Sigmoid colon (tissue), 7 donors: ENCODE measurements at regions of chr12 and their contacts with region 1.

Region 1: DNA sequence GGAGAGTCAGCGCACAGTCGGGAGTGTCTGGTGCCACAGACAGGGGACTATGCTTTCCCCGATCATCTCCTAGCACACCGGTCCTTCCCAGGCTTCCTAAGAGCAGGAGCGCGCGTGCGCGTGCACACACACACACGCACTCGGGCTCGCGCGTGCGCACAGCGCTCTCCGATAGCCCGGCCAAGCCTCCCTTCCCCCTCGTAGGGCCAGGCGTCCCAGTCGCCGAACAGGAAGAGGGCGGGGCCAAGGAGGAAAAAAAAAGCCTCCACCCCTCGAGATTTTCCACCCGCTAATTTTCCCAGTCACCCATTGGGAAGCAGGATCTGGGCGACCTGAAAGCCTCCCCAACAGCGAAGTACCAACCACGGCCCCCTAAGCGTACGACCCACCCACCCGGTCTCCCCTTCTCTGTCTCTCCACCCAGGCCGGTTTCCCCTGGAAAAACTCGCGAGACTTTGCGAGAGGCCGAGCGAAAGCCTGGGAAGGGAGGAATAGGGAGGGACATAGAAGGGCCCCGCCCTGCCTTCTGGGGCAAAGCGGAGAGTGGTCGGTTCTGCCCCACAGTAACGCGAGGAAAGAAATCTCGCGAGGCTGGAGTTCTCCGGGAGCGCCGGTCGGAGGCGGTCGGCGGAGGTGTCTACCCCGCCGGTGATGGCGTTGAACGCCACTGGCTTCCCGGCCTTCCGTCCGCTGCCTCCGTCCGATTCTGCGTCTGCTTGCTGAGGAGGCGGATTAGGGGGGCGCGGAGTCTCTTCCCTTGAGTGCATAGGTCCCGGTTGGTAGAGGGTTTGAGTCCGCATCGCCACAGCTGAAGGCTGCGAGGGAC is at the starts of genes FGFR1OP2 and INTS13:
- DNase-seq: peak; percentile 100
- H3K4me3 ChIP-seq: peak within 1 kb of the TSS; percentile 71 to 96 (median 82)
- H3K27ac ChIP-seq: peak within 1 kb of the TSS; percentile 92 to 98 (median 96)
- H3K4me1 ChIP-seq: peaks cover 0 to 60% (median 46%) of the 10 kb centered on the region in 4 donors
- H3K27me3 ChIP-seq: no peaks in the 10 kb centered on the region
- CTCF ChIP-seq: no peak
- EP300 ChIP-seq: peak in 1 of 4 donors; percentile 79
- POLR2A ChIP-seq: peak; percentile 99
- total RNA-seq, gene FGFR1OP2: 65.2 to 117 (median 97.3) TPM
- total RNA-seq, gene INTS13: 18.7 to 38.2 (median 28.6) TPM

Region 2: GRCh38 chr12:26853303-26854030 is 84.6 kb before region 1 on chr12:
- intact Hi-C with region 1: loop called (anchors 10 kb)
- DNase-seq: peak; percentile 76
- H3K4me3 ChIP-seq: no peak overlapping the region
- H3K27ac ChIP-seq: no peak overlapping the region
- H3K4me1 ChIP-seq: peaks cover 0 to 6% (median 0%) of the 10 kb centered on the region in 4 donors
- H3K27me3 ChIP-seq: no peaks in the 10 kb centered on the region
- CTCF ChIP-seq: peak; percentile 81 to 88 (median 83)
- EP300 ChIP-seq: no peak
- POLR2A ChIP-seq: no peak

Region 3: GRCh38 chr12:27014085-27014858 is 76.2 kb after region 1 on chr12 and contains the start of gene TM7SF3:
- intact Hi-C with region 1: loop called (anchors 1 kb)
- DNase-seq: peak; percentile 95
- H3K4me3 ChIP-seq: peak within 1 kb of the TSS; percentile 69 to 95 (median 84)
- H3K27ac ChIP-seq: peak within 1 kb of the TSS; percentile 81 to 95 (median 92)
- H3K4me1 ChIP-seq: peaks cover 0 to 40% (median 30%) of the 10 kb centered on the region in 4 donors
- H3K27me3 ChIP-seq: no peaks in the 10 kb centered on the region
- CTCF ChIP-seq: peak; percentile 75 to 91 (median 80)
- EP300 ChIP-seq: no peak
- POLR2A ChIP-seq: no peak
- total RNA-seq, gene TM7SF3: 38.4 to 56.9 (median 51.2) TPM

Region 4: GRCh38 chr12:27083861-27084394 is 145.8 kb after region 1 on chr12:
- intact Hi-C with region 1: no loop called
- DNase-seq: no peak
- H3K4me3 ChIP-seq: no peak overlapping the region
- H3K27ac ChIP-seq: no peak overlapping the region
- H3K4me1 ChIP-seq: peaks cover 0 to 24% (median 10%) of the 10 kb centered on the region in 4 donors
- H3K27me3 ChIP-seq: no peaks in the 10 kb centered on the region
- CTCF ChIP-seq: no peak
- EP300 ChIP-seq: no peak
- POLR2A ChIP-seq: no peak

Region 5: GRCh38 chr12:27142101-27142721 is 204.1 kb after region 1 on chr12:
- intact Hi-C with region 1: loop called (anchors 2 kb)
- DNase-seq: peak; percentile 79
- H3K4me3 ChIP-seq: no peak overlapping the region
- H3K27ac ChIP-seq: peak overlapping the region in 2 of 4 donors; percentile 37 to 55
- H3K4me1 ChIP-seq: peaks cover 0 to 24% (median 9%) of the 10 kb centered on the region in 4 donors
- H3K27me3 ChIP-seq: no peaks in the 10 kb centered on the region
- CTCF ChIP-seq: peak; percentile 63 to 79 (median 69)
- EP300 ChIP-seq: no peak
- POLR2A ChIP-seq: no peak

Region 6: GRCh38 chr12:27243804-27244683 is 306.0 kb after region 1 on chr12 and contains the start of gene STK38L:
- intact Hi-C with region 1: loop called (anchors 5 kb)
- DNase-seq: peak; percentile 98
- H3K4me3 ChIP-seq: peak within 1 kb of the TSS; percentile 64 to 95 (median 80)
- H3K27ac ChIP-seq: peak within 1 kb of the TSS; percentile 88 to 95 (median 94)
- H3K4me1 ChIP-seq: peaks cover 0 to 33% (median 21%) of the 10 kb centered on the region in 4 donors
- H3K27me3 ChIP-seq: no peaks in the 10 kb centered on the region
- CTCF ChIP-seq: peak in 2 of 4 experiments; percentile 33 to 43
- EP300 ChIP-seq: peak in 1 of 4 donors; percentile 4
- POLR2A ChIP-seq: peak; percentile 80 to 85
- total RNA-seq, gene STK38L: 67.3 to 86.2 (median 78.3) TPM

Region 7: DNA sequence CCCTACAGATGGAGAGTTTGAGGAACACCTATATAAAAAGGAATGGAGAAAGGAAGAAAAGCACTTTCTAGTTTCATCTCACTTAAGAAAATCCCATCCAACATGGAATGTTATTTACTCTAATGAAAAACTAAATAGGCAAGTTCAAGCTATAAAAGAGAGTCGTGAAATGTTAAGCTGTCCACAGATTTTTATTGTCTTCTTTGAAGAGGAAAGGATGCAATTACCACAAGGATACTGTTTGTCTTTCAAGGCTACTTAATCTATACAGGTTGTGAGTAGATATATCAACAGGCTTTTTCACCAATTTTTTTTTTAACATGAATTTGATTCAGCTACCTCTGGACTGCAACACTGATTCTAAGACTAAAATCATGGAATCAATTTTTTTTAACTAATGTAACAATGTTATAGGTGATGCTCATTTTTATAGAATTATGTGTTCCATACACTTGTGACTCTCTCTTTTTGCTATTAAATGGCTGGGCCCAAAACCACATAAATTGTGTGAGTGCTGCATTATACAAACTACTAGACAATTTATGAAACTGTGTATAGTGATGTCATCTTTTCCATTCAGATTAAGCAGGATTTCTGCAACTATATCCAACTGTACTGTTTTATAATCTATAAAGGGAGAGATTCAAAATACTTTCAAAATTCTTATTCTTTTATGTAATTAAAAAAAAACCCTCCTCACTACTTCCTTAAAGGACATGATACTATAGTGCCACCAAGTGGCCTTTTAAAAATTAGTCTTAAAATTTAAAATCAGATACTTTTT is 367.8 kb after region 1 on chr12:
- intact Hi-C with region 1: loop called (anchors 5 kb)
- DNase-seq: no peak
- H3K4me3 ChIP-seq: no peak overlapping the region
- H3K27ac ChIP-seq: peak overlapping the region; percentile 53 to 73 (median 66)
- H3K4me1 ChIP-seq: peaks cover 0 to 27% (median 23%) of the 10 kb centered on the region in 4 donors
- H3K27me3 ChIP-seq: no peaks in the 10 kb centered on the region
- CTCF ChIP-seq: peak; percentile 13 to 55 (median 25)
- EP300 ChIP-seq: no peak
- POLR2A ChIP-seq: no peak